Right cardiac atrium (tissue), 5 donors: ENCODE measurements at regions of chr4 and their contacts with region 1.

Region 1: GRCh38 chr4:182806259-182807252 is 110.6 kb downstream of the DCTD start:
- DNase-seq: peak; percentile 81 to 93 (median 90)
- ATAC-seq: peak; percentile 91 to 93
- H3K4me3 ChIP-seq: peak overlapping the region; percentile 52
- H3K27ac ChIP-seq: no peak overlapping the region
- H3K4me1 ChIP-seq: no peaks in the 10 kb centered on the region
- H3K27me3 ChIP-seq: no peaks in the 10 kb centered on the region

Region 2: DNA sequence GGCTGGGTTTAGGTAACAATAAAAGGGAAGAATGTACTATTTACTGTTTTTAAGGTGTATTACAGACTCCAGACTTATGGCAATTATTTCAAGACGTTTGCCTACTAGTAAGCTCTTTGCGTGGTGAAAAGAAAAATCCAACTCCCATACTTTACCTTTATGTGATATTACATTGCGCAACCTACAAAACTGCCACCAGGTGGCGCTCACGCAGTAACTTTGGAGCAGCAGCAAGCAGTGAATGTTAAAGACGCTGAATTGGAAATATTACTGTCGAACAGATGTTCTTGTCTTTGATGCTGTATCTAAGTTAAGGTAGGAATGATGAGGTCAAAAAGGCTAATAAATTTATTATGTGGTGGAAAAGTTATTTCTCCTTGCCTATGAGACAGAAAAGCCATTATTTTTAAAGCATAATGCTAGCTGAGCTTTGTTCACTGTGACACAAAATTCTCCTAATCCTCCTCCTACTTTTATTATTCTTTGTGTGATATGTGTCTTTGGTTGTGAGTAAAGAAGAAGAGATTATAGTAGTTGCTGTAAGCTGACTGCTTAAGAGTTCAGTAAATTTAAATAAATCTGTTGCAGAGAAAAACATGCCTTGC is 1663.2 kb before region 1 on chr4:
- intact Hi-C with region 1: loop called in 1 of 4 experiments (anchors 10 kb)
- DNase-seq: peak; percentile 74 to 88 (median 83)
- ATAC-seq: peak; percentile 51 to 57
- H3K4me3 ChIP-seq: no peak overlapping the region
- H3K27ac ChIP-seq: no peak overlapping the region
- H3K4me1 ChIP-seq: no peaks in the 10 kb centered on the region
- H3K27me3 ChIP-seq: no peaks in the 10 kb centered on the region

Region 3: DNA sequence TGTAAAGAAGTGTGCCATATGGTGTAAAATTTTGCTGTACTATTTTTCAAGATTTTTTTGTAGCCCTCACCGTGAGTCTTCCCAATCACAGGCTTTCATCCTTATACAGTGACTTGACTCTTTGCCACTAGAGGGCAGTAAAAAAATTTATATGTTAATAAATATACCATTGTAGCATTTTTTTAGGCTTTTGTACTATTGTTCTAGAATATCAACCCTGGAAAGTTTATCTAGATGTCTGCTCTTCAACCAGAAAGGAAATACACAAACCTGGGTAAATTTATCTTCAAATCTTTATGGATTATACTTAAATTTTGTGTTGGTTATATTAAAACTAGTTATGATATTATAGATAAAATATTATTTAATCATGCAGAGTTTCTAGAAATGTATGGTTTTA is 328.1 kb before region 1 on chr4:
- intact Hi-C with region 1: loop called in 3 of 4 experiments (anchors 5 to 10 kb)
- DNase-seq: no peak
- ATAC-seq: no peak
- H3K4me3 ChIP-seq: no peak overlapping the region
- H3K27ac ChIP-seq: no peak overlapping the region
- H3K4me1 ChIP-seq: no peaks in the 10 kb centered on the region
- H3K27me3 ChIP-seq: no peaks in the 10 kb centered on the region

Region 4: DNA sequence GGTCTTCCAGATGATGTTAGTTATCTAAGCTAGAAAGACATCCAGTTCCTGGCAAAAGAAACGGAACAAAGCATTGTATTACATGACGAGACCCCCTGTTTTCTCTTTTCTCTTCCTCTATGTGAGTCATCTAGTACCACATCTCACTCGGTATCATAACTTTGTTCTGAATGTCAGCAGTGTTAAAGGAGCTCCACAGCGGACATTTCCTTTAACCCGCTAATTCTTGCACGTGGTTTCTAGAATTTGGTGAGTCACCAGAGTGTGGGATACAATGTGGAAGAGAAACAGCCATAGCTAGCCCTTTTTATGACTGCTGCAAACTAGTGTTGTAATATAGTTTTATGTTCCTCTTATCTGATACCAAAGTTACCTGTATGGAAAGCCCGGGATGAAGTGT is 319.7 kb before region 1 on chr4:
- intact Hi-C with region 1: loop called in 1 of 4 experiments (anchors 10 kb)
- DNase-seq: no peak
- ATAC-seq: no peak
- H3K4me3 ChIP-seq: no peak overlapping the region
- H3K27ac ChIP-seq: no peak overlapping the region
- H3K4me1 ChIP-seq: no peaks in the 10 kb centered on the region
- H3K27me3 ChIP-seq: no peaks in the 10 kb centered on the region